HCT116 (cell line): ENCODE measurements at regions of chr16 and their contacts with region 1.

Region 1: DNA sequence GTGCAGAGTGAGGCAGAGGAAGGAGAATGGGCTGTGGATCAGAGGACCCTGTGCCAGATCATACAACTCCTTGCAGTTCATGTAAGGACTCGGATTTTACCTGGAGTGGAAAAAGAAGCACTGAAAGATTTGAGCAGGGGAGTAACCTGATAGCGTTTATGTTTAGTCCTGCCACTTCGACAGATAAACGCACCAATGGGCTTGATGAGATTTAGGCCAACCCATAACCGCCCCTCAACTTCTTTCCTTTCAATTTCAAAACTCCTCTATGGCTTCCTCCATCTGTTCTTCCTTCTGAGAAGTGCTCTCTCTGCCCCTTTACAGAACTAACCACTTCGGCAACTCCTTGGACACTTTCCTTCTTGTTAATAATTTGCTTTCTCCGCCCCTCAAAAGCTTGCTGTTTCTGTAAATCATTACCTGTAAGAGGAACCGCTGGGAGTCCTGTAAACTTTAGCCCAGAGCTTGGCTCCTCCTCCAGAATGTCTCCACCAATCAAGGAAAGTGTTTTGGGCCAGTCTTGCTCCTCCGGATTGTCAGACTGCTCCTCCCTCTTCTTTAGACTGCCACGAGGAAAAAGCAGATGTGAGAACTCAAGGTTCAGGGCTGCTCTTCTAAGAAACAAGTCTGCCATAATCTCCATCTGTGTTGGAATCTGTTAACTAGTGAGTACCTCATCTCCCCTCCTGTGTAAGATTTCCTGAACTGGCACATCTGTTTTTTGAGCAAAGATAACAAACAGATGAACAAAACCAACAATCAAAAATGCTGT is at the start of gene ACSM3:
- DNase-seq: peak; percentile 65
- ATAC-seq: peak; percentile 100
- H3K4me3 ChIP-seq: peak within 1 kb of the TSS; percentile 34 to 51
- H3K27ac ChIP-seq: 0 out of 2 replicates have a peak within 1 kb of the TSS, but pooled peaks have one; percentile 12
- H3K4me1 ChIP-seq: peaks cover 10 to 12% of the 10 kb centered on the region in 2 experiments
- H3K27me3 ChIP-seq: no peaks in the 10 kb centered on the region
- CTCF ChIP-seq: no peak
- POLR2A ChIP-seq: no peak
- RAD21 ChIP-seq: no peak
- total RNA-seq, gene ACSM3: 15.0 TPM

Region 2: GRCh38 chr16:20774703-20775362 is 11.2 kb after region 1 on chr16:
- CTCF ChIA-PET with region 1: interaction called, 14 read pairs
- POLR2A ChIA-PET with region 1: no interaction called
- RAD21 ChIA-PET with region 1: no interaction called
- intact Hi-C with region 1: no loop called
- DNase-seq: peak; percentile 68
- ATAC-seq: peak; percentile 99
- H3K4me3 ChIP-seq: no peak overlapping the region
- H3K27ac ChIP-seq: no peak overlapping the region
- H3K4me1 ChIP-seq: peaks cover 0 to 5% of the 10 kb centered on the region in 2 experiments; a peak in 1 of 4 replicates
- H3K27me3 ChIP-seq: no peaks in the 10 kb centered on the region
- CTCF ChIP-seq: peak; percentile 57 to 93 (median 89)
- POLR2A ChIP-seq: no peak
- RAD21 ChIP-seq: peak; percentile 66